CD4-positive, alpha-beta T cell (primary cell): ENCODE measurements at regions of chr1 and their contacts with region 1.

Region 1: DNA sequence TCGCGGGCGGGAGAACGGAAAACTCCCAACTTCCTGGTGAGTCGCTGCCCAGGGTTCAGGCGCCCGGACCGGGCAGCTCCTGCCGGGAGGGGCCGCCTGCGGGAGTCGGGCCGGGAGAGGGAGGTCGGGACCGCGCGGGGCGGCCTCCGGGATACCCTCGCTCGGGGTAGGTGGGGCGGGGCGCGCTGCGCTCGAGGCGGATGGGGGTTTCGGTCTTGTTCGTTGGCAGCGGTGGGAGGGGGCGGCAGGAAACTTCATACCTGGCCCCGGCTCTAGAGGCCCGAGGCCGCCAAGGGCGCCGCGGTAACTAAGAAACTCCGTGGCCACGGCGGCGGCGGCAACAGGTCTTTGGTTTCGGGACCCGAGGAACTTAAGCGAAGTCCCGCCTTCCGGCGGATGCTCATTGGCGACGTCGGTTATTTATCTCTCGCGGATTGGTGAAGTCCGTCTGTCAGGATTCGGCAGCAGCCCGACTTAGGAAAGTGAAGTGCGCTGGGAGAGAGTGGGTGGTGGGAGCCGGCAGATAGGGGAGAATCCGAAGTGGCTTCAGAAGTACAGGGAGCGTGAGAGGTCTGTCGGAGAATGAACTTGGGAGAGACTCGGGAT is 546 bp downstream of the NEK7 start:
- DNase-seq: peak; percentile 62 to 93 (median 75)
- ATAC-seq: peak; percentile 45
- H3K4me3 ChIP-seq: peak overlapping the region; percentile 87
- H3K4me3 Mint-ChIP-seq: peak overlapping the region; percentile 97
- H3K27ac ChIP-seq: peak overlapping the region; percentile 86 to 95
- H3K27ac Mint-ChIP-seq: peak overlapping the region; percentile 98
- H3K4me1 ChIP-seq: peaks cover 23% of the 10 kb centered on the region
- H3K4me1 Mint-ChIP-seq: peaks cover 54% of the 10 kb centered on the region
- H3K27me3 ChIP-seq: no peaks in the 10 kb centered on the region
- H3K27me3 Mint-ChIP-seq: no peaks in the 10 kb centered on the region
- CTCF ChIP-seq: no peak

Region 2: DNA sequence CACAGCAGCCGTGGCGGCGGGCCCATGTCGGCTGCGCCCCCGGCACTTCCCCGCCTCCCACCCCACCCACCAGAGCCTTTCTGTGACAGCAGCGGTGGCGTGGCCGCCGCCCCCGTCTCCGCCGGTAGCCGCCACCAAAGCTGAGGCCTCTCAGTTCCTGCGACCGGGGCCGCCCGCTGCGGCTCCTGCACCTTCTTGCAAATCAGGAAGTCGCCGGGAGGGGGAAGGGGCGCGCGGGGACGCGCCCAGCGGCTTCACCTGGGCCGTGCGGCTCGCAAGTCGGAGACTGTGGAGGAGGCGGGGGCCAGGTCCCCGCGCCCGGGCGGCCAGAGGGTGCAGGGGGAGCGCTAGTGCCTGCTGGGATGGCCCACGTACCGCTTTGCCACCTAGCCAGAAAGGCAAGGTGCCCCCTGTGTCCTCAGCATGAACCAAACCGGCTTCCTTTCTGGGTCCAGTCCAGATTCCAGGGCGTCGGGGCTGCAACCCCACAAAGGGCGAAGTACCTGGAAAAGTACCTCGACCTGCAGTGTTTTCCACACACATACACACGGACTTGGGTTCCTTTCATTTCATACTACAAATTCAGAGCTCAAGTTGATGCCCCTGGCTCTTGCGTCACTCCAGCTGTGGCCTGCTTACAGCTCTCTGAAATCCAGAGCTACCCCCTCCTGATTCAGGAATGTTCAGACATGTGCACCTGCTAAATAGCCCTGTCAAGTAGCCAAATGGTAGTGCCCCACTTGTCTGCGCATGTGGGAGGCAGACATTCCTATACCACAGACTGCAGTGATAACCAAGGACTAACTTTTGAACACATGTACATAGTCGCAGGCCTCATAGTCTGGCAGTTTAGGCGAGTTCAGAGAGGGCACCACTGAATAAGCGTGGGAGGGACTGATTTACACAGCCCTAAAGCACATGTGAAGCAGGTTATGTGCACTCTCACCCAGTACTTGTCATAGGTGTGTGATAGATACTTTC is 381.8 kb before region 1 on chr1 and contains the start of gene DENND1B:
- CTCF ChIA-PET with region 1: no interaction called
- POLR2A ChIA-PET with region 1: no interaction called
- intact Hi-C with region 1: loop called in 1 of 2 experiments (anchors 10 kb)
- DNase-seq: peak; percentile 64 to 94 (median 80)
- ATAC-seq: peak; percentile 65
- H3K4me3 ChIP-seq: peak within 1 kb of the TSS; percentile 69
- H3K4me3 Mint-ChIP-seq: peak within 1 kb of the TSS; percentile 94
- H3K27ac ChIP-seq: peak within 1 kb of the TSS; percentile 65 to 82
- H3K27ac Mint-ChIP-seq: peak within 1 kb of the TSS; percentile 89
- H3K4me1 ChIP-seq: peaks cover 32% of the 10 kb centered on the region
- H3K4me1 Mint-ChIP-seq: peaks cover 72% of the 10 kb centered on the region
- H3K27me3 ChIP-seq: no peaks in the 10 kb centered on the region
- H3K27me3 Mint-ChIP-seq: no peaks in the 10 kb centered on the region
- CTCF ChIP-seq: peak; percentile 15
- total RNA-seq, gene DENND1B: 23.9 to 26.5 TPM

Region 3: GRCh38 chr1:198088360-198089071 is 68.8 kb before region 1 on chr1:
- CTCF ChIA-PET with region 1: interaction called, 4 read pairs
- POLR2A ChIA-PET with region 1: no interaction called
- intact Hi-C with region 1: loop called in 1 of 2 experiments (anchors 2 kb)
- DNase-seq: peak in 3 of 14 experiments; percentile 52 to 59 (median 56)
- ATAC-seq: no peak
- H3K4me3 ChIP-seq: no peak overlapping the region
- H3K4me3 Mint-ChIP-seq: no peak overlapping the region
- H3K27ac ChIP-seq: no peak overlapping the region
- H3K27ac Mint-ChIP-seq: no peak overlapping the region
- H3K4me1 ChIP-seq: no peaks in the 10 kb centered on the region
- H3K4me1 Mint-ChIP-seq: no peaks in the 10 kb centered on the region
- H3K27me3 ChIP-seq: no peaks in the 10 kb centered on the region
- H3K27me3 Mint-ChIP-seq: no peaks in the 10 kb centered on the region
- CTCF ChIP-seq: peak; percentile 80

Region 4: GRCh38 chr1:198175423-198176170 is 18.3 kb after region 1 on chr1:
- CTCF ChIA-PET with region 1: interaction called, 18 read pairs
- POLR2A ChIA-PET with region 1: interaction called, 160 read pairs
- intact Hi-C with region 1: loop called in 1 of 2 experiments (anchors 2 kb)
- DNase-seq: peak in 4 of 14 experiments; percentile 38 to 72 (median 70)
- ATAC-seq: peak; percentile 82
- H3K4me3 ChIP-seq: no peak overlapping the region
- H3K4me3 Mint-ChIP-seq: peak overlapping the region; percentile 75
- H3K27ac ChIP-seq: peak overlapping the region; percentile 46 to 54
- H3K27ac Mint-ChIP-seq: peak overlapping the region; percentile 91
- H3K4me1 ChIP-seq: peaks cover 37% of the 10 kb centered on the region
- H3K4me1 Mint-ChIP-seq: peaks cover 88% of the 10 kb centered on the region
- H3K27me3 ChIP-seq: no peaks in the 10 kb centered on the region
- H3K27me3 Mint-ChIP-seq: no peaks in the 10 kb centered on the region
- CTCF ChIP-seq: no peak

Region 5: GRCh38 chr1:198253668-198254067 is 96.3 kb after region 1 on chr1:
- CTCF ChIA-PET with region 1: interaction called, 7 read pairs
- POLR2A ChIA-PET with region 1: no interaction called
- intact Hi-C with region 1: loop called (anchors 1 to 5 kb)
- DNase-seq: peak in 3 of 14 experiments; percentile 1 to 23 (median 8)
- ATAC-seq: no peak
- H3K4me3 ChIP-seq: no peak overlapping the region
- H3K4me3 Mint-ChIP-seq: peak overlapping the region; percentile 50
- H3K27ac ChIP-seq: no peak overlapping the region
- H3K27ac Mint-ChIP-seq: peak overlapping the region; percentile 29
- H3K4me1 ChIP-seq: peaks cover 3% of the 10 kb centered on the region
- H3K4me1 Mint-ChIP-seq: peaks cover 48% of the 10 kb centered on the region
- H3K27me3 ChIP-seq: no peaks in the 10 kb centered on the region
- H3K27me3 Mint-ChIP-seq: no peaks in the 10 kb centered on the region
- CTCF ChIP-seq: no peak

Region 6: GRCh38 chr1:198638894-198639635 is 481.7 kb after region 1 on chr1 and contains the start of gene PTPRC:
- CTCF ChIA-PET with region 1: no interaction called
- POLR2A ChIA-PET with region 1: no interaction called
- intact Hi-C with region 1: loop called in 1 of 2 experiments (anchors 5 kb)
- DNase-seq: peak in 4 of 14 experiments; percentile 35 to 88 (median 76)
- ATAC-seq: peak; percentile 83
- H3K4me3 ChIP-seq: peak within 1 kb of the TSS; percentile 79
- H3K4me3 Mint-ChIP-seq: peak within 1 kb of the TSS; percentile 95
- H3K27ac ChIP-seq: peak within 1 kb of the TSS; percentile 67 to 77
- H3K27ac Mint-ChIP-seq: peak within 1 kb of the TSS; percentile 98
- H3K4me1 ChIP-seq: peaks cover 20% of the 10 kb centered on the region
- H3K4me1 Mint-ChIP-seq: peaks cover 62% of the 10 kb centered on the region
- H3K27me3 ChIP-seq: no peaks in the 10 kb centered on the region
- H3K27me3 Mint-ChIP-seq: no peaks in the 10 kb centered on the region
- CTCF ChIP-seq: no peak
- total RNA-seq, gene PTPRC: 661 to 698 TPM

Region 7: GRCh38 chr1:198693321-198693720 is 536.0 kb after region 1 on chr1:
- CTCF ChIA-PET with region 1: no interaction called
- POLR2A ChIA-PET with region 1: no interaction called
- intact Hi-C with region 1: no loop called
- DNase-seq: no peak
- ATAC-seq: peak; percentile 48
- H3K4me3 ChIP-seq: no peak overlapping the region
- H3K4me3 Mint-ChIP-seq: peak overlapping the region; percentile 70
- H3K27ac ChIP-seq: no peak overlapping the region
- H3K27ac Mint-ChIP-seq: peak overlapping the region; percentile 82
- H3K4me1 ChIP-seq: peaks cover 17% of the 10 kb centered on the region
- H3K4me1 Mint-ChIP-seq: peaks cover 88% of the 10 kb centered on the region
- H3K27me3 ChIP-seq: no peaks in the 10 kb centered on the region
- H3K27me3 Mint-ChIP-seq: no peaks in the 10 kb centered on the region
- CTCF ChIP-seq: no peak